Activated naive CD4-positive, alpha-beta T cell treated with anti-CD3 and anti-CD28 coated beads for 36 hours (primary cell): ENCODE measurements at regions of chrX and their contacts with region 1.

Region 1: GRCh38 chrX:47264483-47265173 is 31.8 kb downstream of the USP11 start:
- DNase-seq: peak; percentile 11
- H3K4me3 Mint-ChIP-seq: no peak overlapping the region
- H3K27ac Mint-ChIP-seq: no peak overlapping the region
- H3K4me1 Mint-ChIP-seq: peaks cover 5% of the 10 kb centered on the region
- H3K27me3 Mint-ChIP-seq: no peaks in the 10 kb centered on the region

Region 2: DNA sequence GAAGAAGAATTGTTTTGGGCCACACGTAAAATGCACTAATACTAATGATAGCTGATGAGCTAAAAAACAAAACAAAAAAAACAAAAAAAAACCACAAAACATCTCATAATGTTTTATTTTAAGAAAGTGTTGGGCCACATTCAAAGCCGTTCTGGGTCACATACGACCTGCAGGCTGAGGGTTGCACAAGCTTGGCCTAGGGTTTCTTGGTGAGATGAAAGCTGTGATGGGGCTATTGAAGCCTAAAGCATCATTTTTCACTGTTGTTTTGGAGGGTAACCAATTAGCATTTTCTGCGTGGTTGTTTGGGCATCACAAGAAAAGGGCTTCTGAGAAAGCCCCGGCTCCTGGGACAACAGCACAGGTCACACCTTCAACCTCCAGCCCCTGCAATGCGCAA is 63.3 kb after region 1 on chrX:
- CTCF ChIA-PET with region 1: no interaction called
- intact Hi-C with region 1: loop called (anchors 5 kb)
- DNase-seq: no peak
- H3K4me3 Mint-ChIP-seq: no peak overlapping the region
- H3K27ac Mint-ChIP-seq: no peak overlapping the region
- H3K4me1 Mint-ChIP-seq: peaks cover under 1% of the 10 kb centered on the region
- H3K27me3 Mint-ChIP-seq: no peaks in the 10 kb centered on the region

Region 3: DNA sequence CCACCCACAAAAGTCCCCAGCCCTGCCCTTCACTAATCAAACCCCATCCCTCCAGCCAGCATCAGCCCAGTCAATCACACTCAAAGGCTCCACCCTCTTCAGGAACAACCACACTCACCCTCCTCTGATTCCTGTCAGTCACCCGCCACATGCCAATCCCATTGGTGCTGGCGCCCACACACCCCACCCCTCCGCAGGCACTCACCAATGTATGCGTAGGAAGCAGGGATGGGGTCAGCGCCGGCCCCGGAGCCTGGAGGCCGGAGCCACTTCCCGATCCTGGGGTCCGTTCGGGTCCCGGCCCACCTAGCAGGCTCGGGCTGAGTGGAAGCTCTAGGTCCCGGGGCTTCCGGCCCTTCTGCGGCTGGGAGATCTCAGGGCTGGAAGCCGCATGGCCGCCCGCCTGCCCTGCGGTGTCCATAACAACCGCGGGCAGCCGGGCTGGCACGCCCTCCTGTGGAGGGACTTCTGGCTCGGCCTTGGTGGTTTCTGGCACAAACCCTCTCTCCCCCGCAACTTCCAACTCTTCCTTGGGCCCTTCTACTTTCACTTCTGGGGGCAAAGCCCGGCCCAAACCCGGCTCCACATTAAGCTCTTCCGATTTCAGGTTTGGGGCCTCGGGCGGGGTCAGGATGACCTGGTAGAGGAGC is 373.0 kb after region 1 on chrX:
- CTCF ChIA-PET with region 1: no interaction called
- intact Hi-C with region 1: no loop called
- DNase-seq: peak; percentile 72
- H3K4me3 Mint-ChIP-seq: peak overlapping the region; percentile 70
- H3K27ac Mint-ChIP-seq: peak overlapping the region; percentile 77
- H3K4me1 Mint-ChIP-seq: peaks cover 22% of the 10 kb centered on the region
- H3K27me3 Mint-ChIP-seq: no peaks in the 10 kb centered on the region